Activated CD4-positive, alpha-beta T cell treated with anti-CD3 and anti-CD28 coated beads for 36 hours (primary cell): ENCODE measurements at regions of chr1 and their contacts with region 1.

Region 1: DNA sequence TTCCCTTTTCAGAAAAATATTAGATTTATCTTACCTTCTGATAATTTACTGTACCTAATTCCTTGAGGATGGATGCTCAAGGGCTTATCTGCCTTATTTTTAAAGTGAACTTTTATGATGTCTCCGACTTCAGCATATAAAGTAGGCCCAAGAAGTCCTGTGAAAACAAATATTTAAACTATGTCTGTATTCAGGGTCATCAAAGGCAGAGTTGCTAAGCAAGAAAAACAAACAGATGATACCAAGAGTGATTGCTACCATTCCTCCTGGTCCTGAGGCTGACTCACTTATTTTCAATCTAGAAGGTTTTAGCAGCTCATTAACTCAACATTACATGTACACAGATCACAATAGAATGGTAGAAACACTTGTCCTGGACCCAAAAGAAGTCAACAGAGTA is 14.1 kb downstream of the F5 start:
- DNase-seq: no peak
- ATAC-seq: no peak
- H3K4me3 Mint-ChIP-seq: no peak overlapping the region
- H3K27ac Mint-ChIP-seq: peak overlapping the region; percentile 61
- H3K4me1 Mint-ChIP-seq: peaks cover 24% of the 10 kb centered on the region
- H3K27me3 Mint-ChIP-seq: no peaks in the 10 kb centered on the region

Region 2: GRCh38 chr1:169521226-169521625 is 51.0 kb before region 1 on chr1:
- CTCF ChIA-PET with region 1: no interaction called
- POLR2A ChIA-PET with region 1: no interaction called
- intact Hi-C with region 1: loop called (anchors 5 kb)
- DNase-seq: no peak
- ATAC-seq: no peak
- H3K4me3 Mint-ChIP-seq: no peak overlapping the region
- H3K27ac Mint-ChIP-seq: no peak overlapping the region
- H3K4me1 Mint-ChIP-seq: no peaks in the 10 kb centered on the region
- H3K27me3 Mint-ChIP-seq: no peaks in the 10 kb centered on the region

Region 3: GRCh38 chr1:169529068-169529696 is 43.0 kb before region 1 on chr1:
- CTCF ChIA-PET with region 1: no interaction called
- POLR2A ChIA-PET with region 1: no interaction called
- intact Hi-C with region 1: loop called (anchors 5 kb)
- DNase-seq: no peak
- ATAC-seq: no peak
- H3K4me3 Mint-ChIP-seq: no peak overlapping the region
- H3K27ac Mint-ChIP-seq: no peak overlapping the region
- H3K4me1 Mint-ChIP-seq: peaks cover 15% of the 10 kb centered on the region
- H3K27me3 Mint-ChIP-seq: no peaks in the 10 kb centered on the region